ENCODE measurements at regions of chr11 and their contacts with region 1.

Region 1: DNA sequence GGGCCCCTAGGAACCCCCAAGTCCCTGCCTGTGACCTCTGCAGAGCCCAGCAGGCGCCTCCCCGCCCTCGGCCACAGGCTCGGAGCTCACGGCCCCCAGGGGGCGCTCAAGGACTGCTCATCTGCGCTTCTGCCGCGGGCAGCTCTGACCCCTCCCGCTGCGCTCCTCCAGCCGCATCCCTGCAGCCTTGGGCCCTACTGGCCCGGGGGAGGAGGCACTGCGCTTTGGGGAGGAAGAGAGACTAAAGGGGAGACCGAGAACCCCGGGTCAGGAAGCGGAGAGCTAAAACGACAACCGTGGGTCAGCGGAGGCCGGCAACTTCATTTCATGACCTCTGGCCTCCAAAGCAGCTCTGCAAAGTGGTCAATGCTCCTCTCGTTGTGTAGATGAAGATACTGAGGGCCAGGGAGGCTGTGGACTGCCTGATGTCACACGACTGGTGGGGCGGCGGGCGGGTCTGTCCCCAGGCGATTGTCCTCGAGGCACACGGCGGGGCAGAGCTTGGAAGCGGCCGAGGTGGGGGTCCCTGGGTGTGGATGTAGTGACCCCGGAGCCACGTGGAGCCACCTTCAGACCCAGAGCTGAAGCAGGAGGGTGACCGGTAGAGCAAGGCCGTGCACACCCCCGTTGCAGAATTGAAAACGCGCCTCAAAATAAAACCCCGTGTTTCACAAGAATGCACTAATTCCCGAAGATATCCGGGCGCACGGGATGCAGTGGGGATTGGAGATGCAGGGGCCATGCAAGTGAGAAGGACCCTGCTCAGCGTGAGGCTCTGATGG is 2.7 kb upstream of the KRTAP5-6 start:
- DNase-seq: peak; percentile 95
- H3K4me3 ChIP-seq: peak overlapping the region in 1 of 2 experiments; percentile 51; a peak in 1 of 4 replicates
- H3K27ac ChIP-seq: peak overlapping the region in 1 of 2 experiments; percentile 73; a peak in 1 of 4 replicates
- H3K4me1 ChIP-seq: peaks cover 6 to 13% of the 10 kb centered on the region in 2 experiments; a peak in 2 of 4 replicates
- H3K27me3 ChIP-seq: no peaks in the 10 kb centered on the region
- CTCF ChIP-seq: peak; percentile 85
- EP300 ChIP-seq: no peak
- RAD21 ChIP-seq: peak; percentile 91

Region 2: GRCh38 chr11:1682225-1682905 is 11.9 kb before region 1 on chr11:
- CTCF ChIA-PET with region 1: interaction called, 61 read pairs
- POLR2A ChIA-PET with region 1: no interaction called
- DNase-seq: no peak
- H3K4me3 ChIP-seq: no peak overlapping the region
- H3K27ac ChIP-seq: no peak overlapping the region
- H3K4me1 ChIP-seq: no peaks in the 10 kb centered on the region
- H3K27me3 ChIP-seq: no peaks in the 10 kb centered on the region
- CTCF ChIP-seq: no peak
- EP300 ChIP-seq: no peak
- RAD21 ChIP-seq: no peak

Region 3: GRCh38 chr11:1749414-1750312 is 55.4 kb after region 1 on chr11:
- CTCF ChIA-PET with region 1: interaction called, 39 read pairs
- POLR2A ChIA-PET with region 1: interaction called, 5 read pairs
- DNase-seq: no peak
- H3K4me3 ChIP-seq: peak overlapping the region in 1 of 2 experiments; percentile 50; a peak in 2 of 4 replicates
- H3K27ac ChIP-seq: peak overlapping the region in 1 of 2 experiments; percentile 92; a peak in 1 of 4 replicates
- H3K4me1 ChIP-seq: peaks cover 0 to 79% of the 10 kb centered on the region in 2 experiments; a peak in 1 of 4 replicates
- H3K27me3 ChIP-seq: no peaks in the 10 kb centered on the region
- CTCF ChIP-seq: no peak
- EP300 ChIP-seq: no peak
- RAD21 ChIP-seq: no peak

Region 4: GRCh38 chr11:1825039-1825740 is 130.9 kb after region 1 on chr11:
- CTCF ChIA-PET with region 1: interaction called, 585 read pairs
- POLR2A ChIA-PET with region 1: no interaction called
- DNase-seq: no peak
- H3K4me3 ChIP-seq: peak overlapping the region in 1 of 2 experiments; percentile 43; a peak in 1 of 4 replicates
- H3K27ac ChIP-seq: no peak overlapping the region
- H3K4me1 ChIP-seq: peaks cover 13 to 41% of the 10 kb centered on the region in 2 experiments; a peak in 3 of 4 replicates
- H3K27me3 ChIP-seq: no peaks in the 10 kb centered on the region
- CTCF ChIP-seq: no peak
- EP300 ChIP-seq: no peak
- RAD21 ChIP-seq: no peak

Region 5: DNA sequence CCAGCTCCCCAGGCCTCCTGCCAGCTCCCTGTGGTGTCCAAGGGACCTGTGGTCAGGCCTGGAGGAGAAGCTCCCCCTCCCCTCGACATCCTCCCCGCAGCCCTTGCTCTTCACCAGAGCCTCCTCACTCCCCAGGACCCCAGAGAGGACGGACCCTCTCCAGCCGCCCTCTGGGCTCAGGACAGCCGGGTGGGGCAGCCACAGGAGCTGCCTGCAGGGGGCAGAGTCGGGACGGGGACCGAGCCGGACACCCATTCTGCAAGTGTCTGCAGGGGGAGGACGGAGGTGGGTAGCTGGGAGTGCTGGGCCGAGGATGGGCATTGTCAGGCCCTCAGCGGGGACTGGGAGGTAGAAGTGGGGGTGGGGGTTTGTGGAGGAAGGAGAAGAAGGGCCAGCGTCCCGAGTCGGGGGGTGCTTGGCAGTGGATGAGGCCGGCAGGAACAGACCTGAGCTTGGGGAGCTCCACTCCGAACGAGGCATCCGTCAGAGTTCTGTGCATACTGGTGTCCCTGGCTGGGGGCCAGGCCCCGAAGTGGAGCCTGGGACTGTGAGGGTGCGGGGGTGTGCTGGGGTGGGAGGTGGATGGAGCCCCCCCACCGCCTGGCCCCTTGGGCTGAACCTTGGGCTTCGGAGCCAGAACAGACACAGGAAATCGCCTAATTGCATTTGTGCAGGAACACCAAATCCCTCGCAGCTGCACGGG is 182.3 kb after region 1 on chr11:
- CTCF ChIA-PET with region 1: interaction called, 32 read pairs
- POLR2A ChIA-PET with region 1: no interaction called
- DNase-seq: peak; percentile 86
- H3K4me3 ChIP-seq: no peak overlapping the region; a peak in 1 of 4 replicates
- H3K27ac ChIP-seq: peak overlapping the region; percentile 28 to 78; a peak in 2 of 4 replicates
- H3K4me1 ChIP-seq: peaks cover 0 to 46% of the 10 kb centered on the region in 2 experiments; a peak in 2 of 4 replicates
- H3K27me3 ChIP-seq: no peaks in the 10 kb centered on the region
- CTCF ChIP-seq: peak; percentile 51
- EP300 ChIP-seq: no peak; a peak in 1 of 4 replicates
- RAD21 ChIP-seq: no peak

Region 6: DNA sequence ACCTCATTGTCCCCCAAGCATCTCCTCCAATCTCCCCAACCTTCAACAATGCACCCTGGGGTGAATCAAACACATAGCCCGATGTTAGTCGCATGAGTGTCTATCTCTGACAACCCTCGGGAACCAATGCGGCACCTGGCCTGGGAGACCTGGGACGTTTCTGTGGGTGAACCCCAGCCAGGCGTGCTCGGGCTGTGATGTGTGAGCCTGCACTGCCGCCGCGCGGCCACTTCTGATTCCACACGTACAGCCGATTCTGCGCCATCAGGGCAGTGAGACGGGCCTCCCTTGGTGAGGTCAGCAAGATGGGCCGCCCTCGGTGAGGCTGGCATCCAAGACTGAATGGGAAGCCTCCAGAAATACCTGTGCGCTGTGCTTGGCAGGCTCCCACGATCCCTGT is 308.6 kb after region 1 on chr11:
- CTCF ChIA-PET with region 1: interaction called, 91 read pairs
- POLR2A ChIA-PET with region 1: interaction called, 5 read pairs
- DNase-seq: no peak
- H3K4me3 ChIP-seq: no peak overlapping the region
- H3K27ac ChIP-seq: no peak overlapping the region
- H3K4me1 ChIP-seq: no peaks in the 10 kb centered on the region
- H3K27me3 ChIP-seq: no peaks in the 10 kb centered on the region
- CTCF ChIP-seq: no peak
- EP300 ChIP-seq: no peak
- RAD21 ChIP-seq: no peak